Gastrocnemius medialis (tissue), 4 donors: ENCODE measurements at regions of chr10 and their contacts with region 1.

Region 1: DNA sequence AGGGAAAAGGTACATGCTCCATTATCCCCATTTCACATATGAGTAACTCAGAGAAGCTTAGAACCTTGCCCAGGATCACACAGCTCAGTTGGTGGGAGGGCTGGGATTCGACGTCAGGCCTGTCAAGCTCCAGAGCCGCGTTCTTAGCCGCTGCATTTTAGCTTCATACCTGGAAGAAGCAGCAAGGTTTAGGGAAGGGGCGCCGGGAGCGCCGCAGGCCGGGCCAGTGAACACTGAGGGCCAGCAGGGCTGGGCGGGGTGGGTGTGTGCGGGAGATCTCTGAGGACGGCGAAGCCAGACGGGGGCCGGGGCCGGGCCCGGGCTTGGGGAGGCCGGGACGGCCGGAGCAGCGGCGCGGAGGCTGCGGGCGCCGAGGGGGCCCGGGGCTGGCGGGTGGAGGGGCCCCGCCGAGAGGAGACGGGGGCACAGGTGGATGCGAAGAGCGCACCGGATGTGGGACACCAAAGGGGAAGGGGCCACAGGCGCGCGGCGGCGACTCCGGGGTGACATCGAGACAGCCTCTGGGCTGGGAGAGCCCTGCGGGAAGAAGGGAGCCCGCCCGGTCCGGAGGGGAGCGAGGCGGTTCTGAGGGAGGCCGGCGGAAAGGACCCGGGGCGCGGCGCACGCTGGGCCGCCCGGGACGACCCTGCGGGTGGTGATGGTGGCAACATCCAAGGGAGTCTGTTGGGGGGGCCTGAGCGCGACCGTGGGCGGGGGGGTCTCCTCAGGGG is 498 bp downstream of the NDST2 start:
- DNase-seq: no peak
- ATAC-seq: peak; percentile 43 to 50
- H3K4me3 ChIP-seq: peak overlapping the region; percentile 77 to 93 (median 88)
- H3K27ac ChIP-seq: peak overlapping the region; percentile 76 to 96 (median 90)
- H3K4me1 ChIP-seq: peaks cover 12 to 23% of the 10 kb centered on the region in 2 donors
- H3K27me3 ChIP-seq: no peaks in the 10 kb centered on the region
- CTCF ChIP-seq: no peak
- POLR2A ChIP-seq: no peak

Region 2: DNA sequence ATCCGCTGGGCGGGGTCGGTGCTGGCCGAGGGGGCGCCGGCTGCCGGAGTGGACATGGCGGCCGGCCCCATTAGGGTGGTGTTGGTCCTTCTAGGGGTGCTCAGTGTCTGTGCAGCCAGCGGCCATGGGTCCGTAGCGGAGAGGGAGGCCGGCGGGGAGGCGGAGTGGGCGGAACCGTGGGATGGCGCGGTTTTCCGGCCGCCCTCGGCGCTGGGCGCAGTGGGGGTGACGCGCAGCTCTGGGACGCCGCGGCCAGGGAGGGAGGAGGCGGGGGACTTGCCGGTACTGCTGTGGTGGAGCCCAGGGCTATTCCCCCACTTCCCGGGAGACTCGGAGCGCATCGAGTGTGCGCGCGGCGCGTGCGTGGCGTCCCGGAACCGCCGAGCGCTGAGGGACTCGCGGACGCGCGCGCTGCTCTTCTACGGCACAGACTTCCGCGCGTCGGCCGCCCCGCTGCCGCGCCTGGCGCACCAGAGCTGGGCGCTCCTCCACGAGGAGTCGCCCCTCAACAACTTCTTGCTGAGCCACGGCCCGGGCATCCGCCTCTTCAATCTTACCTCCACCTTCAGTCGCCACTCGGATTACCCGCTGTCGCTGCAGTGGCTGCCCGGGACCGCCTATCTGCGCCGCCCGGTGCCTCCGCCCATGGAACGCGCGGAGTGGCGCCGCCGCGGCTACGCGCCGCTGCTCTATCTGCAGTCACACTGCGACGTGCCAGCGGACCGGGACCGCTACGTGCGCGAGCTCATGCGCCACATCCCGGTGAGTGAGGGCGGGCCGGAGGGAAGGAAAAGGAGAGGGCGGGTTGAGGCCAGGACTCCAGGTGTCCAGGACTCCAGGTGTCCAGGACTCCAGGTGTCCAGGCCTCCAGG is 38.4 kb before region 1 on chr10:
- in situ Hi-C with region 1: no loop called
- intact Hi-C with region 1: loop called (anchors 2 kb)
- DNase-seq: peak; percentile 72 to 87
- ATAC-seq: peak; percentile 77 to 80
- H3K4me3 ChIP-seq: peak overlapping the region; percentile 81 to 98 (median 89)
- H3K27ac ChIP-seq: peak overlapping the region; percentile 94 to 99 (median 98)
- H3K4me1 ChIP-seq: peaks cover 29 to 33% of the 10 kb centered on the region in 2 donors
- H3K27me3 ChIP-seq: no peaks in the 10 kb centered on the region
- CTCF ChIP-seq: peak in 4 of 5 experiments; percentile 9 to 45 (median 21)
- POLR2A ChIP-seq: peak; percentile 83 to 91

Region 3: DNA sequence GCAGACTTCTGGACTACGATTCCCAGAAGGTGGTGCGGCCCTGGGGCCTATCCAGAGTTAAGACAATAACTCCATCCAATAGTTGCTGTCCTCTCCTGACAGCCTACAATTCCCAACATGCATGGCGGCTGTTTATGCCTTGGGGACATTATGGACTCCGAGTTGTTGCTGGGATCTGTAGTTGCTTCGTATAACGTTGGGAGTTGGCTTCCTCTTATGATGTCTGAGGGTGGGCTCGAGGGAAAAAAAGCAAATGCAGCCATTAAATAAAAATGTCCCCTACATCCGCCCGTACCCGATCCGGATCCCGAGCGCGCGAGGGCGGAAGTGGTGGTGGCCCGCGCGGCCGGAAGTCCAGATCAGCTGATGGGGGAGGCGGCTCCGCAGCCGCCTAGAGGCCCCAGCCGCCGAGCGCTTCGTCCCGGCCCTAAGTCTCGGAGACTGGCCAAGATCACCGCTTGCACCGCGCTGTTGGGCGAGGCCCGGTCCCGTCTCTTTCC is 25.6 kb before region 1 on chr10 and contains the start of gene ZSWIM8:
- in situ Hi-C with region 1: no loop called
- intact Hi-C with region 1: loop called (anchors 1 kb)
- DNase-seq: peak; percentile 89 to 91
- ATAC-seq: peak; percentile 93 to 94
- H3K4me3 ChIP-seq: peak within 1 kb of the TSS; percentile 73 to 93 (median 86)
- H3K27ac ChIP-seq: peak within 1 kb of the TSS; percentile 80 to 95 (median 90)
- H3K4me1 ChIP-seq: peaks cover 53 to 62% of the 10 kb centered on the region in 2 donors
- H3K27me3 ChIP-seq: no peaks in the 10 kb centered on the region
- CTCF ChIP-seq: peak in 1 of 5 experiments; percentile 25
- POLR2A ChIP-seq: peak; percentile 85 to 92
- total RNA-seq, gene ZSWIM8: 52.6 to 81.4 (median 78.9) TPM

Region 4: DNA sequence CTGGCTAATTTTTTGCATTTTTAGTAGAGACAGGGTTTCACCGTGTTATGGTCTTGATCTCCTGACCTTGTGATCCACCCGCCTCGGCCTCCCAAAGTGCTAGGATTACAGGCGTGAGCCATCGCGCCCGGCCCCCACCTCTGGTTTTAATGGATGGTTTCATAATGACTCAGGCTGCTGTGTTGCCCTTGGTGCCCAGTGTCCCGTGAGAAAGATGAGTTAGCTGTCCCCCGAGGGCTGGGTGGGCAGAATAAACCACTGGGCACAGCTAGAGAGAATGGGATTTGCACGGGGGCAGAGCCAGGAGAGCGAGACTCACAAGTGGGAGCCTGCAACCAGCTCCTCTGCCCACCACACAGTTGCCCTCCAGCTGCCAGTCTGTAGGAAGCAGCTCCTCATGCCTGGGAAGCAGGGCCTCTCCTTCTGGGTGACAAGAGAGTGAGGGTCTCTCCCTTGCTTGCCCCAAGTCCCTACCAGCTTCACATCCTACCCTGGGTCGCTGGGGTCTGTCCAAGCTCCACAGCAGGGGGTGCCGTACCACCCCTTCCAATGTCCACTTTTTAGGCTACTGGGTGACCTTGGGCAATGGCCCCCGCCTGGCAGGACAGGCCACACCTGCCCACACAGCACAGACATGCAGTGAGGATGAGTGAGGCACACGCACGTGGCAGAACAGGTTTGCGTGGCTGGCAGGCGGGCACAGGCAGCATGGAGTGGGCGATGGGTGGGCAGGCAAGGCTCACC is 16.6 kb after region 1 on chr10:
- in situ Hi-C with region 1: no loop called
- intact Hi-C with region 1: no loop called
- DNase-seq: no peak
- ATAC-seq: no peak
- H3K4me3 ChIP-seq: no peak overlapping the region
- H3K27ac ChIP-seq: no peak overlapping the region
- H3K4me1 ChIP-seq: no peaks in the 10 kb centered on the region
- H3K27me3 ChIP-seq: no peaks in the 10 kb centered on the region
- CTCF ChIP-seq: no peak
- POLR2A ChIP-seq: no peak

Region 5: GRCh38 chr10:73838827-73839226 is 27.9 kb after region 1 on chr10:
- in situ Hi-C with region 1: no loop called
- intact Hi-C with region 1: no loop called
- DNase-seq: no peak
- ATAC-seq: no peak
- H3K4me3 ChIP-seq: no peak overlapping the region
- H3K27ac ChIP-seq: no peak overlapping the region
- H3K4me1 ChIP-seq: no peaks in the 10 kb centered on the region
- H3K27me3 ChIP-seq: no peaks in the 10 kb centered on the region
- CTCF ChIP-seq: no peak
- POLR2A ChIP-seq: no peak

Region 6: GRCh38 chr10:73874267-73875138 is 63.6 kb after region 1 on chr10 and contains the start of gene CAMK2G:
- in situ Hi-C with region 1: no loop called
- intact Hi-C with region 1: loop called (anchors 5 kb)
- DNase-seq: peak; percentile 77 to 86
- ATAC-seq: peak; percentile 77 to 79
- H3K4me3 ChIP-seq: peak within 1 kb of the TSS; percentile 77 to 86 (median 78)
- H3K27ac ChIP-seq: peak within 1 kb of the TSS; percentile 93 to 97 (median 95)
- H3K4me1 ChIP-seq: peaks cover 52 to 62% of the 10 kb centered on the region in 2 donors
- H3K27me3 ChIP-seq: no peaks in the 10 kb centered on the region
- CTCF ChIP-seq: no peak
- POLR2A ChIP-seq: peak; percentile 37 to 76
- total RNA-seq, gene CAMK2G: 48.6 to 67.5 (median 51.7) TPM